CD4-positive, alpha-beta T cell (primary cell): ENCODE measurements at regions of chr9 and their contacts with region 1.

Region 1: DNA sequence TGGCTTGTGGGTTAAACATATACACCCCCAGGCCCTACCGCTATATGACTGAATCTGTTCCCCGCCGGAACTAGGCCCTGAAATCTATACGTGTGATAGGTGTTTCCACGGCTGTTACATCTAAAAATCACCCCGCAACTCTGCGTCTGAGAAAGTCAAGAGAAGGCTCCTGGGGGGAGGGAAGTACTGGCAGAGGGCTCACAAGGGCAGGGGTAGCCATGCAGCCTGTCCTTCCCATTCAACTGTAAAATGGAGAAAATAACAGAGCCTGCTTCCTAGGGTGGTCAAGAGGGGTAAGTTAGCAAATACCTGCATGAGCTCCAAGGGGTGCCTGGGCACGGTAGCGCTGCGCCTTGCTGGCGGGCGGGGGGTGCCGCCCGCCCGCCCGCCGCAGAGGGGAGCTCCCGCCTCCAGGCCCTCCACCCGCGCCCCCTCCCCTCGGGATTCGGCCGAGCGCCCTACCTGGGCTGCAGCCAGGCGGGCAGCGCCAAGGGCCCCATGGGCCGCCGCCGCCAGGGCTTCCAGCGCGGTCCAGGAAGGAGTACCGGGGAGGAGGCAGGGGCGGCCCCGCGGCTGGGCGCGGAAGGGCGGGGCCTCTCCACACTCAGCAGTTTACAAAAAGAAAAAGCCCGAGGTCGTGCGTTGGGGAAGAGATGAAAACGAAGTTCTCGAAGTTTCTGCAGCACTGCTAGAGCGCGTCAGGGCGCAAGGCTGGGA is at the start of gene HACD4:
- DNase-seq: peak; percentile 40 to 86 (median 60)
- ATAC-seq: peak; percentile 86
- H3K4me3 ChIP-seq: peak within 1 kb of the TSS; percentile 63
- H3K4me3 Mint-ChIP-seq: peak within 1 kb of the TSS; percentile 83
- H3K27ac ChIP-seq: peak within 1 kb of the TSS; percentile 62 to 66
- H3K27ac Mint-ChIP-seq: peak within 1 kb of the TSS; percentile 35
- H3K4me1 ChIP-seq: peaks cover 28% of the 10 kb centered on the region
- H3K4me1 Mint-ChIP-seq: peaks cover 35% of the 10 kb centered on the region
- H3K27me3 ChIP-seq: no peaks in the 10 kb centered on the region
- H3K27me3 Mint-ChIP-seq: no peaks in the 10 kb centered on the region
- CTCF ChIP-seq: no peak
- total RNA-seq, gene HACD4: 5.9 to 6.5 TPM

Region 2: DNA sequence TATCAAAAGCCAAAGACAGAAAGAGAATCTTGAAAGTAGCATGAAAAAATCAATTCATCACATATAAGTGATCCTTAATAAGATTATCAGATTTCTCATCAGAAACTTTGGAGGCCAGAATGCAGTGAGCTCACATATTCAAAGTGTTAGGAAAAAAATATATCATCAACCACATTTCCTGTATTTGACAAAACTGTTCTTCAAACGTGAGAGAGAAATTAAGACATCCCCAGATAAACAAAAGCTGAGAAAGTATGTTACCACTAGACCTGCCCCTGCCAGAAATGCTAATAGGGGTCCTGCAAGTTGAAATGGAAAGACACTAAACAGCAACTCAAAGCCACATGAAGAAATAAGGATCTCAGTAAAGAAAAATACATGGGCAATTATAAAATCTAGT is 29.7 kb before region 1 on chr9:
- CTCF ChIA-PET with region 1: no interaction called
- POLR2A ChIA-PET with region 1: interaction called, 11 read pairs
- intact Hi-C with region 1: loop called in 1 of 2 experiments (anchors 1 kb)
- DNase-seq: peak in 3 of 14 experiments; percentile 8 to 68 (median 22)
- ATAC-seq: peak; percentile 54
- H3K4me3 ChIP-seq: no peak overlapping the region
- H3K4me3 Mint-ChIP-seq: no peak overlapping the region
- H3K27ac ChIP-seq: peak overlapping the region in 1 of 2 donors; percentile 39
- H3K27ac Mint-ChIP-seq: peak overlapping the region; percentile 73
- H3K4me1 ChIP-seq: peaks cover 9% of the 10 kb centered on the region
- H3K4me1 Mint-ChIP-seq: peaks cover 33% of the 10 kb centered on the region
- H3K27me3 ChIP-seq: no peaks in the 10 kb centered on the region
- H3K27me3 Mint-ChIP-seq: no peaks in the 10 kb centered on the region
- CTCF ChIP-seq: no peak

Region 3: GRCh38 chr9:21016701-21017491 is 14.4 kb before region 1 on chr9:
- CTCF ChIA-PET with region 1: no interaction called
- POLR2A ChIA-PET with region 1: interaction called, 11 read pairs
- intact Hi-C with region 1: no loop called
- DNase-seq: no peak
- ATAC-seq: no peak
- H3K4me3 ChIP-seq: no peak overlapping the region
- H3K4me3 Mint-ChIP-seq: no peak overlapping the region
- H3K27ac ChIP-seq: no peak overlapping the region
- H3K27ac Mint-ChIP-seq: no peak overlapping the region
- H3K4me1 ChIP-seq: no peaks in the 10 kb centered on the region
- H3K4me1 Mint-ChIP-seq: peaks cover 14% of the 10 kb centered on the region
- H3K27me3 ChIP-seq: no peaks in the 10 kb centered on the region
- H3K27me3 Mint-ChIP-seq: no peaks in the 10 kb centered on the region
- CTCF ChIP-seq: no peak

Region 4: DNA sequence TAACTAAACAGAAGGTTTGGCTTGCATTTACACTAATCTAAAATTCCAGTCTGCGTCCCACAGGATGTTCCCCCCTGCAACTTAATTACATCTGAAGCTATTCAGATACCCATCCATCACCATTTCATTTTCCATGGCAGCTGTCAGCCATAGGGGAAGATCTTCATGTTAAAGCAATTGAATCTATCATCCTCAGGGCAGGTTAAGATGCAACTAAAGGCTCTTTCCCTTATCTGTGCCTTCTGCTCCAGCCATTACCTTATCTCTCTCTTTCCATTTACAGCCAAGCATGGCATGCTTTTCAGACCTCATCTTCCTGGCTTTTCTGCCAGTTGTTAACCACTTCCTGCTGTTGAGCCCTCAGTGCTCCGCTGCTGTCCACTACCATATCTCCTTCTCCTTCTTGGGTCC is 16.0 kb after region 1 on chr9:
- CTCF ChIA-PET with region 1: interaction called, 7 read pairs
- POLR2A ChIA-PET with region 1: interaction called, 4 read pairs
- intact Hi-C with region 1: loop called in 1 of 2 experiments (anchors 2 kb)
- DNase-seq: no peak
- ATAC-seq: no peak
- H3K4me3 ChIP-seq: no peak overlapping the region
- H3K4me3 Mint-ChIP-seq: no peak overlapping the region
- H3K27ac ChIP-seq: no peak overlapping the region
- H3K27ac Mint-ChIP-seq: no peak overlapping the region
- H3K4me1 ChIP-seq: no peaks in the 10 kb centered on the region
- H3K4me1 Mint-ChIP-seq: no peaks in the 10 kb centered on the region
- H3K27me3 ChIP-seq: no peaks in the 10 kb centered on the region
- H3K27me3 Mint-ChIP-seq: no peaks in the 10 kb centered on the region
- CTCF ChIP-seq: no peak

Region 5: DNA sequence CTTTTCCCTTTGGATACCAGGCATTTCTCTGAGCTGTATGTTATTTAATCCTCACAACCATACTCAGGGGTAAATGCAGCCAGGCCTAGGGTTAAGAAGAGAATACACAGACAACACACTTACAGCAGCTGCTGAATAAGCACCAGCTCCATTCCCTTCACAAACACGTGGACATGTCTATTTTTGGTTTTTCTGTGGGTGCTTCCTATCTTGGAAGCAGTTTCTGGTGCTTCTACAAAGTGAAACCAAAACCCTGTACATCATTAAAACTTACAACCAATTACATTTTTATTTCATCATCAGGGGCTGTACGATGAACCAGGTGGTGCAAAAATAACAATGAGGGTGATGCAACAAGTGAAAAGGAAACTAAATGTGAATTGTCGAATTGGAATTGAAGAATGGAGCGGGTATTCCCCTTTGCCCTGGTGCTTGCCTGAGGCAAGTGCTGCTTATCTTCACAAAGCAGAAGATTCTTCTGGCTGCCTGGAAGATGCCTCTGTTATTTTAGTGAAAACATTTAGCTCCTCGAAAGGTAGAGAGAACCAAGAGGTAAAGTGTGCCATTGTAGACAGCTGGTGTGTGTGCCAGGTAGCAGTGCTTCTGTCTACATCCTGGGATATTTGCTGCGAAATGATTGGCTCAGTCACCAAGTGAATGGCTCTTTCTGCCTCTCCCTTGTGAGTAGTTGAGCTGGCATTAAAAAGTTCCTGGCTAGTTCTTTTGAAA is 65.1 kb after region 1 on chr9:
- CTCF ChIA-PET with region 1: no interaction called
- POLR2A ChIA-PET with region 1: interaction called, 4 read pairs
- intact Hi-C with region 1: loop called in 1 of 2 experiments (anchors 5 kb)
- DNase-seq: peak in 8 of 14 experiments; percentile 7 to 86 (median 18)
- ATAC-seq: peak; percentile 95
- H3K4me3 ChIP-seq: peak overlapping the region; percentile 33
- H3K4me3 Mint-ChIP-seq: peak overlapping the region; percentile 74
- H3K27ac ChIP-seq: peak overlapping the region in 1 of 2 donors; percentile 59
- H3K27ac Mint-ChIP-seq: peak overlapping the region; percentile 87
- H3K4me1 ChIP-seq: peaks cover 21% of the 10 kb centered on the region
- H3K4me1 Mint-ChIP-seq: peaks cover 25% of the 10 kb centered on the region
- H3K27me3 ChIP-seq: no peaks in the 10 kb centered on the region
- H3K27me3 Mint-ChIP-seq: no peaks in the 10 kb centered on the region
- CTCF ChIP-seq: no peak

Region 6: DNA sequence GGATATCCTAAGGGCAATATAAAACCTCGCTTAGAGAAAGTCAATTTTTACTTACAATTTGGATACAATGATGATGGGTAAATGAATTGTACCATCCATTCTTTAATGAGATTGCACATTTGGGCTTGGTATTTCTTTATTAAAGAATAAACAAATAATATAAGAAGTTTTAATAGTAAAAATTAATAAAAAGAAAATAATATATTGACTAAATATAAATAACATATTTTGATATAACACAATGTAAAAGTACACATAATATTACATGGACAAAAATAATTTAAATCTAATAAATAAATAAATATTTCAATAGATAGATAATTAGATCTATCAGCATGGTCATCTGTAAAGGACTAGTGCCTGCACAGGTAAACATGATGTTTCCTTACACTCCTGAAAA is 134.3 kb after region 1 on chr9:
- CTCF ChIA-PET with region 1: no interaction called
- POLR2A ChIA-PET with region 1: no interaction called
- intact Hi-C with region 1: no loop called
- DNase-seq: no peak
- ATAC-seq: no peak
- H3K4me3 ChIP-seq: no peak overlapping the region
- H3K4me3 Mint-ChIP-seq: no peak overlapping the region
- H3K27ac ChIP-seq: no peak overlapping the region
- H3K27ac Mint-ChIP-seq: no peak overlapping the region
- H3K4me1 ChIP-seq: no peaks in the 10 kb centered on the region
- H3K4me1 Mint-ChIP-seq: peaks cover 29% of the 10 kb centered on the region
- H3K27me3 ChIP-seq: no peaks in the 10 kb centered on the region
- H3K27me3 Mint-ChIP-seq: peaks cover 6% of the 10 kb centered on the region
- CTCF ChIP-seq: no peak